ENCODE measurements at regions of chr20 and their contacts with region 1.

Region 1: GRCh38 chr20:32706486-32706885 is 32.7 kb upstream of the C20orf203 start:
- DNase-seq: no peak
- ATAC-seq: no peak
- H3K4me3 ChIP-seq: no peak overlapping the region
- H3K27ac ChIP-seq: no peak overlapping the region
- H3K4me1 ChIP-seq: peaks cover 12% of the 10 kb centered on the region
- H3K27me3 ChIP-seq: no peaks in the 10 kb centered on the region
- CTCF ChIP-seq: no peak
- POLR2A ChIP-seq: no peak
- RAD21 ChIP-seq: no peak

Region 2: GRCh38 chr20:32737371-32738223 is 31.1 kb after region 1 on chr20:
- CTCF ChIA-PET with region 1: no interaction called
- POLR2A ChIA-PET with region 1: interaction called, 17 read pairs
- dilution Hi-C with region 1: no loop called
- in situ Hi-C with region 1: no loop called
- intact Hi-C with region 1: no loop called
- DNase-seq: peak; percentile 91
- ATAC-seq: peak; percentile 72
- H3K4me3 ChIP-seq: no peak overlapping the region
- H3K27ac ChIP-seq: peak overlapping the region; percentile 51
- H3K4me1 ChIP-seq: peaks cover 6% of the 10 kb centered on the region
- H3K27me3 ChIP-seq: no peaks in the 10 kb centered on the region
- CTCF ChIP-seq: no peak
- POLR2A ChIP-seq: no peak
- RAD21 ChIP-seq: no peak